ENCODE measurements at regions of chr14 and their contacts with region 1.

Region 1: GRCh38 chr14:67674481-67675169 is at the start of gene VTI1B:
- DNase-seq: peak; percentile 93
- H3K4me3 Mint-ChIP-seq: peak within 1 kb of the TSS; percentile 90
- H3K27ac Mint-ChIP-seq: peak within 1 kb of the TSS; percentile 90
- H3K4me1 Mint-ChIP-seq: peaks cover 35% of the 10 kb centered on the region
- H3K27me3 Mint-ChIP-seq: no peaks in the 10 kb centered on the region
- total RNA-seq, gene VTI1B: 75.3 and 78.5 TPM in 2 replicates

Region 2: GRCh38 chr14:67514650-67515385 is 159.8 kb before region 1 on chr14:
- intact Hi-C with region 1: no loop called
- DNase-seq: peak; percentile 87
- H3K4me3 Mint-ChIP-seq: peak overlapping the region; percentile 87
- H3K27ac Mint-ChIP-seq: peak overlapping the region; percentile 25
- H3K4me1 Mint-ChIP-seq: peaks cover 8% of the 10 kb centered on the region
- H3K27me3 Mint-ChIP-seq: peaks cover 65% of the 10 kb centered on the region

Region 3: GRCh38 chr14:67619446-67620216 is 55.0 kb before region 1 on chr14 and contains the start of gene ARG2:
- intact Hi-C with region 1: loop called (anchors 2 kb)
- DNase-seq: peak; percentile 99
- H3K4me3 Mint-ChIP-seq: peak within 1 kb of the TSS; percentile 92
- H3K27ac Mint-ChIP-seq: peak within 1 kb of the TSS; percentile 85
- H3K4me1 Mint-ChIP-seq: peaks cover 33% of the 10 kb centered on the region
- H3K27me3 Mint-ChIP-seq: peaks cover 15% of the 10 kb centered on the region
- total RNA-seq, gene ARG2: 4.7 and 5.0 TPM in 2 replicates

Region 4: DNA sequence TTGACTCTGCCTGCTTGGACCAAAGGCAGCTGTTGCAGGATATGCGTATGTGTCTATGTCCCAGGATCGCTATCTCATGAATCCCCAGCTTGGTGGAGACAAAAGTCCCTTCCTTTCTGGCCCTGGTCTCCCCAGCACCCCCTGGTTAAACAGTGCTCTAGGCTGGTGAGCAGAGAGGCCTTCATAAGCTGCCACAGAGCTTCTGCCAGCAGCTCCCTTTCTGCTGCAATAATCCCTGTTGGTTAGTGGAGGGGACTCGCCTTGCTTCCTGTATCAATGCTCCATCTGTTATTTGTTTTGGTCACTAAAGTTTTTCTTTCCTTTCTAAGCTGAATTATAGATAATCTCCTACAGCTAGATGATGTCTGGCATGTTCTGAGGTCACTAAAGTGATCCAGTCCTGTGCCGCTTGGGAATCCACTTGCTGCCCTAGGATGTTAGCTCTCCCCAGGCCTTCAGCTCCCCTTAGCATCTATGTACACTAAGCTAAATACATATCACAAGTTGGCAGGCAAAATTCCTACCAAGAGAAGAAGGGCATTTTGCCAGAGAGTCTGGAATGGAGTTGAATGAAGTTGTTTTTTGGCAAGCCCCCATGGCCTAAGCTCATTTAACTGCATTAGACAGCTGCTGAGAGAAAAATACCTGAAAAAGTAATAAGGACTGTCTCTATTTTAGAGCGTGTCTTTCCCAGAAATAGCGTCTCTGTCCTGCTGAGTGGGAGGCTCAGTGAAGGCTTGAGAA is 74.9 kb after region 1 on chr14:
- intact Hi-C with region 1: no loop called
- DNase-seq: no peak
- H3K4me3 Mint-ChIP-seq: no peak overlapping the region
- H3K27ac Mint-ChIP-seq: no peak overlapping the region
- H3K4me1 Mint-ChIP-seq: peaks cover 13% of the 10 kb centered on the region
- H3K27me3 Mint-ChIP-seq: no peaks in the 10 kb centered on the region